ENCODE measurements at regions of chr3 and their contacts with region 1.

Region 1: GRCh38 chr3:107676469-107677309 is 153.9 kb downstream of the BBX start:
- DNase-seq: peak in 3 of 14 experiments; percentile 38 to 49 (median 39)
- ATAC-seq: peak; percentile 51
- H3K4me3 ChIP-seq: no peak overlapping the region
- H3K4me3 Mint-ChIP-seq: no peak overlapping the region
- H3K27ac ChIP-seq: no peak overlapping the region
- H3K27ac Mint-ChIP-seq: peak overlapping the region; percentile 8
- H3K4me1 ChIP-seq: no peaks in the 10 kb centered on the region
- H3K4me1 Mint-ChIP-seq: peaks cover 47% of the 10 kb centered on the region
- H3K27me3 ChIP-seq: no peaks in the 10 kb centered on the region
- H3K27me3 Mint-ChIP-seq: no peaks in the 10 kb centered on the region
- CTCF ChIP-seq: peak; percentile 77

Region 2: GRCh38 chr3:107690522-107691138 is 13.9 kb after region 1 on chr3:
- CTCF ChIA-PET with region 1: interaction called, 16 read pairs
- POLR2A ChIA-PET with region 1: interaction called, 3 read pairs
- intact Hi-C with region 1: no loop called
- DNase-seq: peak in 3 of 14 experiments; percentile 60 to 73 (median 70)
- ATAC-seq: peak; percentile 73
- H3K4me3 ChIP-seq: no peak overlapping the region
- H3K4me3 Mint-ChIP-seq: no peak overlapping the region
- H3K27ac ChIP-seq: no peak overlapping the region
- H3K27ac Mint-ChIP-seq: no peak overlapping the region
- H3K4me1 ChIP-seq: peaks cover 3% of the 10 kb centered on the region
- H3K4me1 Mint-ChIP-seq: peaks cover 37% of the 10 kb centered on the region
- H3K27me3 ChIP-seq: no peaks in the 10 kb centered on the region
- H3K27me3 Mint-ChIP-seq: no peaks in the 10 kb centered on the region
- CTCF ChIP-seq: peak; percentile 59

Region 3: DNA sequence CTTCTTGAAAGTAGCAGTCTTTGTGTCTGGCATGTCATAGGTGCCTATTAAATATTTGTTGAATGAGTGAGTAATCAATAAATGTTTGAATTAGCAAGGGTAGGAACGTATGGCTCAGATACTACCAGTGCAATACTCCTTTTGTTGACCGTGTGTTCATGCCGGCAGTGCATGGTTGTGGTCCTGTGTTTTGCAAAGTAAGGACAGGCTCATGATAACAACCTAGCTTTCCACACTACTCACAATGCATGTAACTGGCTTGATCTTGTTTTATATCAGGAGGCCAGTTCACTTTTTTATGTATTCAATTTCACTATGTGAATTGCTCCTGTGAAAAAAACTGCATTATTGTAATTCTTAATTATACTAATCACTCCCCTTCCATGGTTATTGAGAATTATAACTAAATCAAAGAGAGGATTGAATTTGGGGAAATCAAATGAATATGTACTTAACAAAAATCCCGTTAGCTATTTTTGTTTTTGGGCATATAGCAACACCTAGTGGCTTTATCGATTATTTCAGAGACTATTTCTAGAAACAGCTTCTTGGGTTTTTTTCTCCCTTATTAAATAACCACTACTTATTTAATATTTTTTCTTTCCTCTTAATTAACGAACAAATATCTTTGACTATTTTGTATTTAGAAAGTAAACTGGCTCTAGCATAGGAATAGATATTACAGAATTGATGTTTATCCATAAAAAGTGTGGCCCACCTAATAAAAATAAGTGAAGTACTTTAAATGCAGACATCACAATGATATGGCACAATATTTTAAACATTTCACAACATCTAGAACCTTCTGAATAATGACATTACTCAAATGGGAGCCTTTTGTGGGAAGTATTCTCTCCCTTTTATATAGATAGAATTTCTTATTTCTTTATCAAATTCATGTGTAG is 64.6 kb after region 1 on chr3:
- CTCF ChIA-PET with region 1: interaction called, 13 read pairs
- POLR2A ChIA-PET with region 1: interaction called, 6 read pairs
- intact Hi-C with region 1: loop called (anchors 1 to 2 kb)
- DNase-seq: peak in 3 of 14 experiments; percentile 37 to 40 (median 40)
- ATAC-seq: no peak
- H3K4me3 ChIP-seq: no peak overlapping the region
- H3K4me3 Mint-ChIP-seq: no peak overlapping the region
- H3K27ac ChIP-seq: no peak overlapping the region
- H3K27ac Mint-ChIP-seq: no peak overlapping the region
- H3K4me1 ChIP-seq: no peaks in the 10 kb centered on the region
- H3K4me1 Mint-ChIP-seq: no peaks in the 10 kb centered on the region
- H3K27me3 ChIP-seq: no peaks in the 10 kb centered on the region
- H3K27me3 Mint-ChIP-seq: no peaks in the 10 kb centered on the region
- CTCF ChIP-seq: peak; percentile 71

Region 4: GRCh38 chr3:107927361-107928083 is 250.8 kb after region 1 on chr3:
- CTCF ChIA-PET with region 1: interaction called, 5 read pairs
- POLR2A ChIA-PET with region 1: interaction called, 4 read pairs
- intact Hi-C with region 1: loop called in 1 of 2 experiments (anchors 5 kb)
- DNase-seq: peak; percentile 37 to 83 (median 56)
- ATAC-seq: peak; percentile 90
- H3K4me3 ChIP-seq: peak overlapping the region; percentile 68
- H3K4me3 Mint-ChIP-seq: peak overlapping the region; percentile 91
- H3K27ac ChIP-seq: no peak overlapping the region
- H3K27ac Mint-ChIP-seq: no peak overlapping the region
- H3K4me1 ChIP-seq: peaks cover 16% of the 10 kb centered on the region
- H3K4me1 Mint-ChIP-seq: peaks cover 14% of the 10 kb centered on the region
- H3K27me3 ChIP-seq: peaks cover 0 to 6% of the 10 kb centered on the region in 2 experiments
- H3K27me3 Mint-ChIP-seq: peaks cover 4% of the 10 kb centered on the region
- CTCF ChIP-seq: peak; percentile 94

Region 5: GRCh38 chr3:108552267-108553159 is 875.8 kb after region 1 on chr3:
- CTCF ChIA-PET with region 1: interaction called, 3 read pairs
- POLR2A ChIA-PET with region 1: no interaction called
- intact Hi-C with region 1: loop called in 1 of 2 experiments (anchors 10 kb)
- DNase-seq: peak in 4 of 14 experiments; percentile 9 to 68 (median 62)
- ATAC-seq: no peak
- H3K4me3 ChIP-seq: no peak overlapping the region
- H3K4me3 Mint-ChIP-seq: no peak overlapping the region
- H3K27ac ChIP-seq: no peak overlapping the region
- H3K27ac Mint-ChIP-seq: no peak overlapping the region
- H3K4me1 ChIP-seq: no peaks in the 10 kb centered on the region
- H3K4me1 Mint-ChIP-seq: no peaks in the 10 kb centered on the region
- H3K27me3 ChIP-seq: no peaks in the 10 kb centered on the region
- H3K27me3 Mint-ChIP-seq: no peaks in the 10 kb centered on the region
- CTCF ChIP-seq: peak; percentile 62